SK-N-SH (cell line): ENCODE measurements at regions of chr3 and their contacts with region 1.

Region 1: GRCh38 chr3:46882377-46883053 is 5.0 kb downstream of the PTH1R start:
- DNase-seq: peak; percentile 82
- H3K4me3 ChIP-seq: peak overlapping the region; percentile 44 to 64
- H3K27ac ChIP-seq: no peak overlapping the region
- H3K4me1 ChIP-seq: peaks cover 0 to 20% of the 10 kb centered on the region in 2 experiments; a peak in 1 of 4 replicates
- H3K27me3 ChIP-seq: peaks cover 22% of the 10 kb centered on the region
- CTCF ChIP-seq: no peak
- EP300 ChIP-seq: no peak
- RAD21 ChIP-seq: no peak

Region 2: DNA sequence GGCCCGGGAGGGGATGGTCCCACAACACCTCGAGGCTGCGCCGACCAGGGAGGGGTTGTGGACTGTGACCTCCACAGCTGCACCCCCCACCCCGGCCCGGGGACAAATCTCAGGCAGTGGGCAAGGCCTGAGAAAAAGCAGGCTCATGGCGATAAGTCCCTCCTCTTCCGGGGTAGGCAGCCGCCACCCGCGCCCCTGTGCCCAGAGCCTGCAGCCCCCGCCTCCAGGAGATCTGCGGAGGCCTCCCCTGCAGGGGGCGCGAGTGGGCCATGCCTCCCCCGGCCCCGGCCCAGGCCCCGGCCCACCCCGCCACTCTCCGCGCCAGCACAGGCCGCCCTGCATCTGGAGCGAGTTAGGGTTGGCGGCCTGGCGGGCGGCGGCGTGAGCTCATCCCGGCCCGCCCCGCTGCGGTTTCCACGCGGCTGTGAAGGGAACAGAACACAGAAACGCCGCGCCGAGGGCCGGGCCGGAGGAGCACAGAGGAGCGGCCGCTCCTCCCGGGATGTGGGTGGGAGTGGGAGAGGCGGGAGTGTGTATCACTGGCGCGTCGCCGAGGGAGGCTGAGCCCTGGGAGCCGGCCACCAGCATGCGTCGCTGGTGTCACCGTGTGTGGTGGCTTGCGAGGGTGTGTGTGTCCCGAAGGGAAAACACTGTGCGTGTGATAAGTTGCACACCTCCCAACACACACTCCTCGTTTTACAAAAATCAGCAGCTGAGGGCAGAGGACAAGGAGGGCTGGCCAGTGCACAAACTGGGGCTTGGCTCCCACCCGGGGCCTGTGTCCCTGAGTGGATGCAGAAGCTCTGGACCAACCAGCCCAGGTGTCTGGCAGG is 36.5 kb before region 1 on chr3:
- CTCF ChIA-PET with region 1: interaction called, 17 read pairs
- POLR2A ChIA-PET with region 1: interaction called, 6 read pairs
- DNase-seq: peak; percentile 98
- H3K4me3 ChIP-seq: peak overlapping the region; percentile 46 to 49; a peak in 3 of 4 replicates
- H3K27ac ChIP-seq: peak overlapping the region; percentile 38 to 98
- H3K4me1 ChIP-seq: peaks cover 0 to 27% of the 10 kb centered on the region in 2 experiments; a peak in 2 of 4 replicates
- H3K27me3 ChIP-seq: no peaks in the 10 kb centered on the region
- CTCF ChIP-seq: peak; percentile 53
- EP300 ChIP-seq: peak in 1 of 2 experiments; percentile 21; a peak in 1 of 4 replicates
- RAD21 ChIP-seq: peak; percentile 64

Region 3: DNA sequence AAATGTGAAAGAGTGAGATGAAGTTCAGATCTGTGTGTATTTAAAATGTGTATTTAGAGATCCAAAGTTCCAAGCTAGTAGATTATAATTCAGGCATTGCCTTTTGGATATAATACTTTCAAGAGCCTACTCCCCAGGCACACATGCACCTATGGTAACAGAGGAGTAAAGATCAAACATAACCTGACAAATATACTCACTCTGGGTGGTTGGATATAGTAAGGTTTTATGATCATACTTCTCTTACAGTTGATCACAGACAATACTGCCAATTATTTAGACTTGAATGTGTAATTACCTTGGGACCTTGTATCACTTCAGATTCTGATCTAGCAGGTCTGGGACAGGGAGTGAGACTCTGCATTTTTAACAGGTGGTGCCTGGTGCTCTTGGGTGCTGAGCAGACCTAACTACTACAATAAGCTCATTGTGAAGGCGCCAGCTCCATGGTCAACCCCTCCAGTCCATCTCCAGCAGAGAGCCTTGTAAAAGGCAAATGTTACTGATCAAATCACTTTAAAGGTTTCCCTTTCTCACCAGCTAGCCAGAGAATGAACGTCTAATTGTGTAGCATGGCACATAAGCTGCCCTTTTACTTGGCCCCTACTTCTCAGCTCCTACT is 152.5 kb after region 1 on chr3:
- CTCF ChIA-PET with region 1: no interaction called
- POLR2A ChIA-PET with region 1: no interaction called
- DNase-seq: no peak
- H3K4me3 ChIP-seq: no peak overlapping the region
- H3K27ac ChIP-seq: no peak overlapping the region; a peak in 1 of 4 replicates
- H3K4me1 ChIP-seq: no peaks in the 10 kb centered on the region
- H3K27me3 ChIP-seq: no peaks in the 10 kb centered on the region
- CTCF ChIP-seq: no peak
- EP300 ChIP-seq: no peak
- RAD21 ChIP-seq: no peak